Calu3 (cell line): ENCODE measurements at regions of chr13 and their contacts with region 1.

Region 1: GRCh38 chr13:75482070-75482819 is at the start of gene TBC1D4:
- DNase-seq: peak; percentile 73
- H3K4me3 Mint-ChIP-seq: peak within 1 kb of the TSS; percentile 85
- H3K27ac Mint-ChIP-seq: peak within 1 kb of the TSS; percentile 52
- H3K4me1 Mint-ChIP-seq: peaks cover 15% of the 10 kb centered on the region
- H3K27me3 Mint-ChIP-seq: no peaks in the 10 kb centered on the region
- CTCF ChIP-seq: peak; percentile 32
- total RNA-seq, gene TBC1D4: 15.2 and 15.4 TPM in 2 replicates

Region 2: GRCh38 chr13:75250526-75251178 is 231.6 kb before region 1 on chr13:
- CTCF ChIA-PET with region 1: no interaction called
- intact Hi-C with region 1: no loop called
- DNase-seq: no peak
- H3K4me3 Mint-ChIP-seq: no peak overlapping the region
- H3K27ac Mint-ChIP-seq: no peak overlapping the region
- H3K4me1 Mint-ChIP-seq: no peaks in the 10 kb centered on the region
- H3K27me3 Mint-ChIP-seq: no peaks in the 10 kb centered on the region
- CTCF ChIP-seq: no peak

Region 3: GRCh38 chr13:75326173-75327134 is 155.8 kb before region 1 on chr13:
- CTCF ChIA-PET with region 1: no interaction called
- intact Hi-C with region 1: no loop called
- DNase-seq: no peak
- H3K4me3 Mint-ChIP-seq: no peak overlapping the region
- H3K27ac Mint-ChIP-seq: no peak overlapping the region
- H3K4me1 Mint-ChIP-seq: peaks cover 8% of the 10 kb centered on the region
- H3K27me3 Mint-ChIP-seq: no peaks in the 10 kb centered on the region
- CTCF ChIP-seq: no peak

Region 4: DNA sequence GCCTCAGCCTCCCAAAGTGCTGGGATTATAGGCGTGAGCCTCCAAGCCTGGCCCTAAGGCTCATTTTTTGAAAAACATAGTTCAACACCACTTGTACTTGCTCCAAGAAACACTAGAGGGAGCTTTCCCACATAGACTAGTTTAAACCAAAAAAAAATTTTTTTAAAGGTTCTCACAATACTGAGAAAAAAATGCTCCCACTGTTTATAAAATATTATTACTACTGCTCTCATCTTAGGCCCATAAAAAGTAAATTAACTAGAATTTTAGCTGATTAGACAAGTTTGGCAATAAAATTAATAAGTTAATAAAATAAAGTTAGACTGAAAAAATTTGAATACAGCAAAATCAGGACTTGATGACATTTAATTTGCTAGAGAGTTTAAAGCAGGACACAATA is 109.7 kb before region 1 on chr13:
- CTCF ChIA-PET with region 1: interaction called, 3 read pairs
- intact Hi-C with region 1: loop called (anchors 2 kb)
- DNase-seq: peak; percentile 3
- H3K4me3 Mint-ChIP-seq: no peak overlapping the region
- H3K27ac Mint-ChIP-seq: no peak overlapping the region
- H3K4me1 Mint-ChIP-seq: no peaks in the 10 kb centered on the region
- H3K27me3 Mint-ChIP-seq: no peaks in the 10 kb centered on the region
- CTCF ChIP-seq: no peak

Region 5: DNA sequence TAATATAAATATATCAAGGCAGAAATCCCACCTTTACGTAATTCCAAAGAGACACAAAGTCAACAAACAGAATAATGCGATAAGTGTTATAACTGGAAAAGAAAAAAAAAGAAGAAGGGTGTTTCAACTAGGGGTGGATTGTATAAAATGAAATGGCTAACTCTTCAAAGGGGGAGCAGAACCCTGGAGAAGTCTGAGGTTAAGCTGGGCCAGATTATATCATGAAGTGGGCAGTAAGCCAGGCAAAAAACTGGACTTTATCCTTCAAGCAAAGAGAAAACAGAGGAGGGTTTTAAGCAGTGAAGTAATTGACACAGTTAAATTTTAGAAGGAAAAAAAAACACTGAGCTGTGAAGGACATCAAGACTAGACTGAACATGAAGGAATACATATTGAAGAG is 42.1 kb before region 1 on chr13:
- CTCF ChIA-PET with region 1: no interaction called
- intact Hi-C with region 1: loop called (anchors 5 kb)
- DNase-seq: no peak
- H3K4me3 Mint-ChIP-seq: no peak overlapping the region
- H3K27ac Mint-ChIP-seq: no peak overlapping the region
- H3K4me1 Mint-ChIP-seq: no peaks in the 10 kb centered on the region
- H3K27me3 Mint-ChIP-seq: no peaks in the 10 kb centered on the region
- CTCF ChIP-seq: no peak

Region 6: GRCh38 chr13:75549262-75550158 is 67.3 kb after region 1 on chr13 and contains the start of gene UCHL3:
- CTCF ChIA-PET with region 1: interaction called, 4 read pairs
- intact Hi-C with region 1: loop called (anchors 10 kb)
- DNase-seq: peak; percentile 87
- H3K4me3 Mint-ChIP-seq: peak within 1 kb of the TSS; percentile 96
- H3K27ac Mint-ChIP-seq: peak within 1 kb of the TSS; percentile 93
- H3K4me1 Mint-ChIP-seq: peaks cover 19% of the 10 kb centered on the region
- H3K27me3 Mint-ChIP-seq: no peaks in the 10 kb centered on the region
- CTCF ChIP-seq: peak; percentile 36
- total RNA-seq, gene UCHL3: 19.4 and 23.2 TPM in 2 replicates

Region 7: GRCh38 chr13:75830842-75831241 is 348.6 kb after region 1 on chr13:
- CTCF ChIA-PET with region 1: no interaction called
- intact Hi-C with region 1: no loop called
- DNase-seq: no peak
- H3K4me3 Mint-ChIP-seq: no peak overlapping the region
- H3K27ac Mint-ChIP-seq: no peak overlapping the region
- H3K4me1 Mint-ChIP-seq: peaks cover 14% of the 10 kb centered on the region
- H3K27me3 Mint-ChIP-seq: no peaks in the 10 kb centered on the region
- CTCF ChIP-seq: no peak

Region 8: GRCh38 chr13:76198568-76199163 is 716.4 kb after region 1 on chr13:
- CTCF ChIA-PET with region 1: no interaction called
- intact Hi-C with region 1: no loop called
- DNase-seq: no peak
- H3K4me3 Mint-ChIP-seq: no peak overlapping the region
- H3K27ac Mint-ChIP-seq: no peak overlapping the region
- H3K4me1 Mint-ChIP-seq: no peaks in the 10 kb centered on the region
- H3K27me3 Mint-ChIP-seq: no peaks in the 10 kb centered on the region
- CTCF ChIP-seq: no peak